ENCODE measurements at regions of chr3 and their contacts with region 1.

Region 1: DNA sequence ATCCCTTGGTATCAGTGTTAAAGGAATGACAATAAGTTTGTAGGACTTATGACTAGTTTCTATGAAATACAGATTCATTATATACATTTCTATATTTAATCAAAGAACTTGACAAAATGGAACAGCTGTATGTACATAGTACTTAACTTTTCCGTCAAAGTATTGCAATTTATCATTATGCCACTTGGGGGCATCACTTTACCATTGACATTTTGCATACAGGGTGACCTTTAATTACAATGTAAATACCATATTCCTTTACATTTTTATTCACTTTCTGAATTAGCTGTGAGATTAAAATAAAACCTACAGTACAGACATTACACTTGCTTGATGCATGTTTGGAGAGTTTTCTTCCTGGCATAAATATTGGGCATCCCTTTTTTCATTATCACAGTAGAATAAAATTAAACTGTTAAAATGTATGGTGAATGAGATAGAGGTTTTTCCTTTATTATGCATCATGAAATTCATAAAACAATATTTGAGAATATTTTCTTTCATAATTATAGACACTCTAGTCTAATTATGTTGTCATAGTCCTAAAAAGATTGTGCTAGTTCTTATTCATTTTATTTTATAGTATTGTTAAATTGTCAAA is 6.9 kb downstream of the NEK11 start:
- DNase-seq: peak in 7 of 9 donors; percentile 18 to 62 (median 55)
- ATAC-seq: peak; percentile 80
- H3K4me3 ChIP-seq: no peak overlapping the region
- H3K4me3 Mint-ChIP-seq: no peak overlapping the region
- H3K27ac ChIP-seq: no peak overlapping the region
- H3K27ac Mint-ChIP-seq: no peak overlapping the region
- H3K4me1 ChIP-seq: no peaks in the 10 kb centered on the region
- H3K4me1 Mint-ChIP-seq: peaks cover 0 to 2% (median 0%) of the 10 kb centered on the region in 7 donors
- H3K27me3 ChIP-seq: no peaks in the 10 kb centered on the region
- H3K27me3 Mint-ChIP-seq: peaks cover 0 to 7% (median 0%) of the 10 kb centered on the region in 5 donors

Region 2: DNA sequence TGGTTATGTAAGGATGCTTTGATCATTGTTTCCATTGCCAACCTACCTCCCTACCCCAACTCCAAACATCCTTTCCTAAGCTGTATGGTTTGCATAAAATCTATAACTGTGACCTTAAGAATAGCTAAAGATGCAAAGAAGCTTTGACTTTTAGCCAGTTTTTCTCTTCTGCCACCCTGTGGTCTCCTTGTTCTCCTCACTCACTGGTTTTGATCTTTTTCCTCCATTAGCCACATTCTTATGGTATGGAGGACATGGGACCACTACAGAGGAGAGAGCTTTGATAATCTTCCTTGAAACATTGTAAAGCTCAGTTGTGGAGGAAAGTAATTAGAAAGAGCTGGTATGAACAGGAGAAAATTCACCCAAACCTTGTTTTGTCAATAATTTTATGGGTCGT is 109.0 kb after region 1 on chr3:
- CTCF ChIA-PET with region 1: interaction called, 3 read pairs
- POLR2A ChIA-PET with region 1: interaction called, 3 read pairs
- intact Hi-C with region 1: loop called (anchors 1 to 10 kb)
- DNase-seq: no peak
- ATAC-seq: no peak
- H3K4me3 ChIP-seq: no peak overlapping the region
- H3K4me3 Mint-ChIP-seq: no peak overlapping the region
- H3K27ac ChIP-seq: no peak overlapping the region
- H3K27ac Mint-ChIP-seq: no peak overlapping the region
- H3K4me1 ChIP-seq: no peaks in the 10 kb centered on the region
- H3K4me1 Mint-ChIP-seq: no peaks in the 10 kb centered on the region
- H3K27me3 ChIP-seq: no peaks in the 10 kb centered on the region
- H3K27me3 Mint-ChIP-seq: peaks cover 0 to 5% (median 0%) of the 10 kb centered on the region in 5 donors

Region 3: GRCh38 chr3:131485119-131485518 is 451.5 kb after region 1 on chr3:
- CTCF ChIA-PET with region 1: no interaction called
- POLR2A ChIA-PET with region 1: no interaction called
- intact Hi-C with region 1: loop called in 1 of 2 experiments (anchors 5 kb)
- DNase-seq: no peak
- ATAC-seq: no peak
- H3K4me3 ChIP-seq: no peak overlapping the region
- H3K4me3 Mint-ChIP-seq: no peak overlapping the region
- H3K27ac ChIP-seq: no peak overlapping the region
- H3K27ac Mint-ChIP-seq: no peak overlapping the region
- H3K4me1 ChIP-seq: no peaks in the 10 kb centered on the region
- H3K4me1 Mint-ChIP-seq: peaks cover 10 to 30% (median 21%) of the 10 kb centered on the region in 7 donors
- H3K27me3 ChIP-seq: no peaks in the 10 kb centered on the region
- H3K27me3 Mint-ChIP-seq: no peaks in the 10 kb centered on the region

Region 4: DNA sequence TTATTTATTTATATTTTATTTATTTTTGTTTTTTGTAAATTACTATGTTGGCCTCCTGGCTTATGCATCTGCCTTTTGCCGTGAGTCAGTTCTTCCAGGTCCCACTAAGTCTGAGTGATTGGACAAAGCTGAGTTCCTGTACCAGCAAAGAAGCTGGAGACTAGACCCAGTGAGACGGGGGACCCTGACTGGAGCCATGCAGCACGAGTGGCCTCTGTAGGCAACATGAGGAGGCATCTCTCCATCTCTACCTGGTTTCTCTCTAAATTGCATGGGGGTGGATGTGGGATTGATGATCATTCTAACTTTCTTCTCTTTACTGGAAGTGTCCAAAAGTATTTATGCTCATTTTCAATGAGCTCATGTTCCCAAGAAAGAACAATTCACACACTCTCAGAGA is 624.5 kb after region 1 on chr3:
- CTCF ChIA-PET with region 1: no interaction called
- POLR2A ChIA-PET with region 1: no interaction called
- intact Hi-C with region 1: loop called in 1 of 2 experiments (anchors 10 kb)
- DNase-seq: no peak
- ATAC-seq: no peak
- H3K4me3 ChIP-seq: no peak overlapping the region
- H3K4me3 Mint-ChIP-seq: no peak overlapping the region
- H3K27ac ChIP-seq: no peak overlapping the region
- H3K27ac Mint-ChIP-seq: no peak overlapping the region
- H3K4me1 ChIP-seq: no peaks in the 10 kb centered on the region
- H3K4me1 Mint-ChIP-seq: no peaks in the 10 kb centered on the region
- H3K27me3 ChIP-seq: peaks cover 0 to 3% of the 10 kb centered on the region in 2 donors
- H3K27me3 Mint-ChIP-seq: peaks cover 7 to 23% (median 19%) of the 10 kb centered on the region in 5 donors

Region 5: DNA sequence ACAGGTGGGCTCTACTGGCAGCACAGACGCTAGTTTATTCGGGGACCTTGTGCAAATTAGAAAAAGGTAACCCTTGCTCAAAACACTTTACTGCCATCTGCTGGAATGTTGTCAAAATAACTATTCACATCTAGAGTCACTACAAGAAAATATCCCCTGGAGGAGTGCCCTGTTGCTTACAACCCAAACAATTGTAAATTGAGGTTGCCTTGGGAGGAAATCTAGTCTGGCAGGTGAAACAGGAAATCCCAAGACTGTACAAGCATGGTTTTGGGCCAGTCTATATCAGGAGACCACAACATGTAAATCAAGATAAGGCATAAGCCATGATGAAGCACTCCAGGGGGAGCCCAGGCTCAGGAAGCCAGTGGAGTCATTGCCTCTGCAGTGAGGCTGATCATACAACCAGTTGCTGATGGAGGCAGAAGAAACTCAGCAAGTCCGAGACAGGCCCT is 1146.8 kb after region 1 on chr3:
- CTCF ChIA-PET with region 1: interaction called, 3 read pairs
- POLR2A ChIA-PET with region 1: no interaction called
- intact Hi-C with region 1: loop called in 1 of 2 experiments (anchors 2 kb)
- DNase-seq: peak in 6 of 9 donors; percentile 8 to 33 (median 18)
- ATAC-seq: peak; percentile 58
- H3K4me3 ChIP-seq: no peak overlapping the region
- H3K4me3 Mint-ChIP-seq: peak overlapping the region in 2 of 10 donors; percentile 3 to 27
- H3K27ac ChIP-seq: no peak overlapping the region
- H3K27ac Mint-ChIP-seq: no peak overlapping the region
- H3K4me1 ChIP-seq: no peaks in the 10 kb centered on the region
- H3K4me1 Mint-ChIP-seq: peaks cover 0 to 6% (median 4%) of the 10 kb centered on the region in 7 donors
- H3K27me3 ChIP-seq: no peaks in the 10 kb centered on the region
- H3K27me3 Mint-ChIP-seq: peaks cover 2 to 20% (median 7%) of the 10 kb centered on the region in 5 donors

Region 6: DNA sequence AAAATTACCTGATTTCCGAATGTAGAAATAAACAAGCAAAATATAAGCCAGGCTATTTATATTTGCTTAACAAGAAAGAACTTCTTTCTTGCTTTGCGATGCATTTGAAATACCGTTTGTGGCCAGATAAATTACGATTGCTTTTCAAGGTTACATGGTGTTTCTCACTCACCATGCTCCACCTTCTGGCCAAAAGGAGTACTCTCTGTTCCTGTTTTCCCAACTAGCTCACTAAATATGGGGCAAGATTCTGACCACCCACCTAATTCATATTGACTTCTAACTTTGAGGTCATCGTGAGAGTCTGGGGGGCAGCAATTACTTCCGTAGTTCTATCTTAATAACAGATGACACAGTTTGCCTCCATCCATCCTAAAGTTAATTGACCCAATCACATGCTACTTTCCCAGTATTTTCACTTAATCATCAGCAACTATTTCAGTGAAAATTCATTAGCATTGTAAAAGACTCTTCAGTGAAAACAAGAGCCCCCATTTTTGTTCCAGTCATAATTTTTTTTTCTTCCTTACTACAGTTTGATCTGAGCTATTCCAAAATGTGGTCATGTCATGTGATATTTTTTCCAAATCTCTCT is 1309.5 kb after region 1 on chr3:
- CTCF ChIA-PET with region 1: no interaction called
- POLR2A ChIA-PET with region 1: no interaction called
- intact Hi-C with region 1: loop called in 1 of 2 experiments (anchors 1 kb)
- DNase-seq: peak in 5 of 9 donors; percentile 12 to 29 (median 21)
- ATAC-seq: peak; percentile 50
- H3K4me3 ChIP-seq: no peak overlapping the region
- H3K4me3 Mint-ChIP-seq: peak overlapping the region in 3 of 10 donors; percentile 19 to 32 (median 27)
- H3K27ac ChIP-seq: no peak overlapping the region
- H3K27ac Mint-ChIP-seq: no peak overlapping the region
- H3K4me1 ChIP-seq: no peaks in the 10 kb centered on the region
- H3K4me1 Mint-ChIP-seq: peaks cover 0 to 11% (median 0%) of the 10 kb centered on the region in 7 donors
- H3K27me3 ChIP-seq: no peaks in the 10 kb centered on the region
- H3K27me3 Mint-ChIP-seq: peaks cover 0 to 22% (median 0%) of the 10 kb centered on the region in 5 donors